ENCODE measurements at regions of chr11 and their contacts with region 1.

Region 1: DNA sequence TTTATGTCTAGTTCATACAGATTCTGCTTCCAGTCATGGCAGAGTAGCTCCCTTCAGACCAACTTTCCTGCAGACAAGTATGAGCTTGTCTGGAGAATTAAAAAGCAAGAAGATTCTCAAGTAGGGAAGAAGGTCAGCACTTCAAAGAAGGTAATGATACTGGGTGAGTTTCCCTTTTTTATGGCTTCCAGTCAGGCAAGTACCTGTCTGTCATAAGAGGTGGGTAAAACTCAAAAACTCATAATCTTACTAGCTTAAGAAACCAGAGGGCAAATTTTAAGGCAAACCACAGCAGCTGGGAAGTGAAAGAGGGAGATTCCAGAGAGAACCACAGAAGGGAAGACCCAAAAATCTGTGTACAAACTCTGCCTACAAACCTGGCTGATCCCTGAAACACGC is 54.2 kb downstream of the DENND5A start:
- DNase-seq: no peak
- H3K4me3 ChIP-seq: no peak overlapping the region
- H3K27ac ChIP-seq: no peak overlapping the region
- H3K4me1 ChIP-seq: peaks cover 16% of the 10 kb centered on the region
- H3K27me3 ChIP-seq: no peaks in the 10 kb centered on the region
- CTCF ChIP-seq: no peak

Region 2: DNA sequence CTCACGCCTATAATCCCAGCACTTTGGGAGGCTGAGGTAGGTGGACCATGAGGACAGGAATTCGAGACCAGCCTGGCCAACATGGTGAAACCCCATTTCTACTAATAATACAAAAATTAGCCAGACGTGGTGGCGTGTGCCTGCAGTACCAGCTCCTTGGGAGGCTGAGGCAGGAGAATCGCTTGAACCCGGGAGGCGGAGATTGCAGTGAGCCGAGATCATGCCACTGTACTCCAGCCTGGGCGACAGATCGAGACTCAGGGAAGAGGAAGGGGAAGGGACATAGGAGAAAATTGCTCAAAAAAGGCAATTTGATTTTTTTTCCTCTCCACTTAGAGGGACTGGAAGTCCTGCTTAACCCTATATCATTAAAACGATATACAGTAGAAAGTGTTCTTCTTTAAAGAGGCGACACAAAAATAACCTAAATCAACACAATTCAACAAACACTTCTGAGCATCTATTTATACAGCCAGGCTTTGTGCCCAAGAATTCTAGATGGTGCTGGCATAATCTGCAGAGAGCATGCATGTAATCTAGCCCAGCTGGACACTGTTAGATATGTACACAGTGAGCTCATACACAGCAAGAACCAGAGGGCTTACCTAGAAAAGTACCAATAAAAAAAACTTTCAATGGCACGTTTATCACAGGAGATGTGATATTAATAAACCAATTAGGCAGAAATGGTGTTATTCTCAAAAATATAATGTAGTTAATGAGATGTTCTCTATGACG is 75.1 kb after region 1 on chr11:
- CTCF ChIA-PET with region 1: interaction called, 12 read pairs
- POLR2A ChIA-PET with region 1: no interaction called
- intact Hi-C with region 1: no loop called
- DNase-seq: no peak
- H3K4me3 ChIP-seq: no peak overlapping the region
- H3K27ac ChIP-seq: no peak overlapping the region
- H3K4me1 ChIP-seq: no peaks in the 10 kb centered on the region
- H3K27me3 ChIP-seq: no peaks in the 10 kb centered on the region
- CTCF ChIP-seq: no peak